Activated CD4-positive, alpha-beta T cell treated with anti-CD3 and anti-CD28 coated beads for 36 hours (primary cell): ENCODE measurements at regions of chr19 and their contacts with region 1.

Region 1: GRCh38 chr19:33176670-33177416 is 17.3 kb upstream of the LRP3 start:
- DNase-seq: peak; percentile 97
- ATAC-seq: peak; percentile 91
- H3K4me3 Mint-ChIP-seq: peak overlapping the region; percentile 86
- H3K27ac Mint-ChIP-seq: peak overlapping the region; percentile 92
- H3K4me1 Mint-ChIP-seq: peaks cover 37% of the 10 kb centered on the region
- H3K27me3 Mint-ChIP-seq: no peaks in the 10 kb centered on the region

Region 2: DNA sequence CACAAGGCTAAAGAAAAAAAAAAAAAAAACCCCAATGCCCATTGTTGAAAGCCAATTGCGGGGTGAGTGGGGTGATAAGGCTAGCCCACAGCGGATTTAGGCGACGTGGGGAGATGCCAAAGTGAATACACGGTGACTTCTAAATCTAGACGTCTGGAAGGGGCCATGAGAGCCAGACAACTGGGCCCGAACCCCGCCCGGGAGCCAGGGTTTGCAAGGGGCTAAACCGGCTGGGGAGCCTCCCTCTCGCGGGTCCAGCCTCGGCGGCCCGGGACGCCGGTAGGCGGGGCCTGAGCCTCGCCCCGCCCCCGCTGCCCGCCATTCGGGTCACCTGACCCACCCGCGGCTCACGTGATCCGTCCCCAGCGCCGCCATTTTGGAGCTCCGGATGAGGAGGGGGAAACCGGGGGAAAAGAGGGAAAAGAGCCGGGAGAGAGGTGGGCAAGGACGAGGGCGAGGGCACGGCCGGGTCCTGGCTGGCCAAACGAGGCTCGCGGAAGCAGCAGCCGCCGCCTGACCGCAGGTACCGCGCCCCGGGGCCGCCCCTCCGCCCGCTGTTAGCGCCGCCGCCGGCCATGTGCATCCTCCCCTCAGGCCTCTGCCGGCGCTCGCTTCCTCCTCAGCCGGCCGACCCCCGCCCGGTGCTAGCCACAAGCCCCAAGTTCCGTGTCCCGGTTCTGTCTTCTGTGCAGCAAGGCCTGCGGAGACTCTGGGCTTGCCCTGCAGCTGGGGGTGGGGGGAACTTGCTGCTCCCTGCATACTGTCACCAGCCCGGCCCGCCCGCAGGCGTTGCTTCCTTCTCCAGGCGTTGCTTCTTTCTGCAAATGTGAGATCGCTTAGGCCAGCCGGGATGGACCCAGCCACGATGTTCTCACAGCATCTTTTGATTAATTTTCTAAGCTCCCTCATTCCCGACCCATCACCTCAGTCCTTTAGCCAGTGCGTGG is 831.3 kb before region 1 on chr19 and contains the start of gene ZNF507:
- CTCF ChIA-PET with region 1: no interaction called
- POLR2A ChIA-PET with region 1: no interaction called
- intact Hi-C with region 1: loop called in 1 of 2 experiments (anchors 1 kb)
- DNase-seq: peak; percentile 93
- ATAC-seq: peak; percentile 82
- H3K4me3 Mint-ChIP-seq: peak within 1 kb of the TSS; percentile 92
- H3K27ac Mint-ChIP-seq: peak within 1 kb of the TSS; percentile 95
- H3K4me1 Mint-ChIP-seq: peaks cover 42% of the 10 kb centered on the region
- H3K27me3 Mint-ChIP-seq: peaks cover 2% of the 10 kb centered on the region
- total RNA-seq, gene ZNF507: 25.2 to 27.6 TPM

Region 3: DNA sequence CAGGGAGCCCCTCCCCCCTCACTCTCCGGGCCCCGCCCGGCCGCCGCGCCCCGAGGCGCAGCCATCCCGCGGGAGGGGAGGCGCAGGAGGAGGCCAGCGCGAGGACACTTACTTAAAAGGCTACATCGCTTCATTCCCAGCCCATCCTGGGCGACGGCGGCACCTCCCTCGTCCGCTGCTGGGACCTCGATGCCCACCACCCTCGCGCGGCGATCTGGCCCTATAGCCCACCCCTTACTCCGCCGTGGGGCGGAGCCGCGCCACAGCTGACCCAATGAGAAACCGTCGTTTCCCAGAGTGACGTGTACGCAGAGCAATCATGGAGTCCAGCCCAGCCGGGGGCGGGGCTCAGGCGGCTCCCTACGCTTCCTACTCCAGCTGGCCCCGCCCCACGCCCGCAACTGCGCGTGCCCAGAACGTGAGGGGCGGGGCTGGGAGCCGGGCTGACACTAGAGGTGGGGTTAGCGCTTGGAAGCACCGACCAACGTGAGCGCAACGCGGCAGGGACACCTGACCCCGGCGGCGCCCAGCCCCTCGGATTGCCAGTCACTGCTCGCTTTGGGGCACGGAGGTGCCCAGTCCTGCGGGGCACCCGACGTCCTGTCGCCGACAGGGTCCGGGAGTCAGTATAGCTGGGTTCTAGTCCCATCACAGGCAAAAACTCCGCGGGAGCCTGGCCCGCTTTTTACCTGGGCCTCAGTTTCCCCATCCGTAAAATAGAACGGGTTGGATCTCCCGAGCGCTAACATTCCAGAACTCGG is 501.7 kb before region 1 on chr19 and contains the start of gene ANKRD27:
- CTCF ChIA-PET with region 1: no interaction called
- POLR2A ChIA-PET with region 1: no interaction called
- intact Hi-C with region 1: loop called in 1 of 2 experiments (anchors 1 kb)
- DNase-seq: peak; percentile 99
- ATAC-seq: peak; percentile 95
- H3K4me3 Mint-ChIP-seq: peak within 1 kb of the TSS; percentile 78
- H3K27ac Mint-ChIP-seq: peak within 1 kb of the TSS; percentile 69
- H3K4me1 Mint-ChIP-seq: peaks cover 30% of the 10 kb centered on the region
- H3K27me3 Mint-ChIP-seq: peaks cover 11% of the 10 kb centered on the region
- total RNA-seq, gene ANKRD27: 36.6 to 37.0 TPM

Region 4: GRCh38 chr19:33064792-33065550 is 111.9 kb before region 1 on chr19 and contains the start of gene RHPN2:
- CTCF ChIA-PET with region 1: no interaction called
- POLR2A ChIA-PET with region 1: no interaction called
- intact Hi-C with region 1: loop called in 1 of 2 experiments (anchors 1 kb)
- DNase-seq: peak; percentile 82
- ATAC-seq: peak; percentile 95
- H3K4me3 Mint-ChIP-seq: peak within 1 kb of the TSS; percentile 67
- H3K27ac Mint-ChIP-seq: no peak within 1 kb of the TSS
- H3K4me1 Mint-ChIP-seq: peaks cover 3% of the 10 kb centered on the region
- H3K27me3 Mint-ChIP-seq: peaks cover 28% of the 10 kb centered on the region
- total RNA-seq, gene RHPN2: 5.1 to 5.7 TPM

Region 5: DNA sequence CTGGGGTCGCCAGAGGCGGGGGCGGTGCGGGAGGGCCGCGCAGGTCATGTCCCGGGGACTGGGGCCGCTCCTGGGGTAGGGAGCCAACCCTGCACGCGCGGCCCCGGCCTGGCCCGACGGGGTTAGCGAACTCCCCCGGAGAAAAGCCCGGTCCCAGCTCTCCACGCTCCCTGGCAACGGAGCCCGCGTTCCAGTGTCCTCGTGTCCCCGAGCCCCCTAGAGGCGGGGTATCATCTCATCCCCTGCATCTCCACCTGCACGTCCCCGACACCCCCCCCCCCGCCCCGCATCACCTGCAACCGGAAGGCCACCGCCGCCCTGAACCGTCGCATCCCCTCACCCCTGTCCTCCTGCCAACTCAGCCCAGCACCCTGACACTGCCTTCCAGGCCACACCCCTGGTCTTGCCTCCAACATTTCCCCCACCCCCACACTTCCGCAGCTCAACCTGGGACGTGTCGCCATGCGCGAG is 42.2 kb before region 1 on chr19:
- CTCF ChIA-PET with region 1: interaction called, 4 read pairs
- POLR2A ChIA-PET with region 1: interaction called, 4 read pairs
- intact Hi-C with region 1: loop called in 1 of 2 experiments (anchors 1 kb)
- DNase-seq: peak; percentile 91
- ATAC-seq: peak; percentile 96
- H3K4me3 Mint-ChIP-seq: peak overlapping the region; percentile 66
- H3K27ac Mint-ChIP-seq: no peak overlapping the region
- H3K4me1 Mint-ChIP-seq: peaks cover 12% of the 10 kb centered on the region
- H3K27me3 Mint-ChIP-seq: no peaks in the 10 kb centered on the region

Region 6: GRCh38 chr19:33163481-33163880 is 13.4 kb before region 1 on chr19:
- CTCF ChIA-PET with region 1: interaction called, 18 read pairs
- POLR2A ChIA-PET with region 1: interaction called, 8 read pairs
- intact Hi-C with region 1: loop called (anchors 1 to 2 kb)
- DNase-seq: no peak
- ATAC-seq: no peak
- H3K4me3 Mint-ChIP-seq: no peak overlapping the region
- H3K27ac Mint-ChIP-seq: no peak overlapping the region
- H3K4me1 Mint-ChIP-seq: peaks cover 25% of the 10 kb centered on the region
- H3K27me3 Mint-ChIP-seq: no peaks in the 10 kb centered on the region

Region 7: GRCh38 chr19:33795370-33796163 is 618.7 kb after region 1 on chr19:
- CTCF ChIA-PET with region 1: no interaction called
- POLR2A ChIA-PET with region 1: no interaction called
- intact Hi-C with region 1: loop called in 1 of 2 experiments (anchors 5 kb)
- DNase-seq: peak; percentile 77
- ATAC-seq: peak; percentile 59
- H3K4me3 Mint-ChIP-seq: peak overlapping the region; percentile 72
- H3K27ac Mint-ChIP-seq: no peak overlapping the region
- H3K4me1 Mint-ChIP-seq: peaks cover 2% of the 10 kb centered on the region
- H3K27me3 Mint-ChIP-seq: peaks cover 24% of the 10 kb centered on the region